ENCODE measurements at regions of chr9 and their contacts with region 1.

Region 1: DNA sequence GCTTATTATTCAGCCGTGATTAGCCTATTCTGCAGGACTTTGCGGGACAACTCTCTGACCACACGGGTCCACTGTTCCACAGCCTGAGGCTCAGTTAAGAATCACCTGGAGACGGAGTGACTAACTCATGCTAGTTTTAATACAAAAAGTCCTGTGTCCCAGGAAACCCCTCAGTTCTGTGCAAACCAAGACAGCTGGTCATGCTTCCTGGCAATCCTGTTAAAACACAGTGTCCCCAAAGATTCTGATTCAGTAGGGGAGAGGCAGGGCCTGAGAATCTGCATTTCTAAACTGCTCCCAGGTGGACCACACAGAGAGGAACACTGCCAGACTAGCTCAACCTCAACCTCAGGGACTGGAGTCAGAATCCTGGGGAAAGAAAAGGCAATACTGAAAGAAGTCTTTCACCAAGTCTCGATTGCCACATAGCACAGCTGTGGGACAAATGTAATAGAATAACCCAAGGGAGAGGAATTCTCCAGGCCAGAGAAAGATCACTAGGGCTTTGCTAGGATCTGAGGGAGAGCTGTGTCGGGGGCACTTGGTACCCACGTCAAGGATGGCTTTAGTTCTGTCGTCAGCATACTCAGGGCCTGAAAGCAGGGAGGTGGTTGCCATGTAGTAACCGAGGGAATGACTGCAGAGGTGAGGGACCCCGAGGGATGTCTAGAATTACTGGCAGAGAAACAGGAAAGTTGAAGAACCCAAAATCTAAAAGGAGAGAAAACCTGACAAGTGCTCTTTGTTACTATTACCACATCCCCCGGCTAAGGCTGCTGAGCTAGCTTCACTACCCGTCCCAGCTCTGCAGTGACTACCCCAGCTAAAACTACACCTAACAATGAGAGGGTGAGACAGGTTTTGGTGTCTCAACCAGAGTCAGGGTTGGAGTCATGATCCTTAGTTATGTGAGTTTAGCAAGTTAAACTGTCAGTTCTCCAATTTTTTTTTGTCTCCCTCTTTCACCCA is 8.6 kb downstream of the SUSD1 start:
- DNase-seq: peak; percentile 51
- H3K4me3 Mint-ChIP-seq: peak overlapping the region; percentile 18
- H3K27ac Mint-ChIP-seq: peak overlapping the region; percentile 18
- H3K4me1 Mint-ChIP-seq: peaks cover 56% of the 10 kb centered on the region
- H3K27me3 Mint-ChIP-seq: no peaks in the 10 kb centered on the region
- CTCF ChIP-seq: no peak

Region 2: GRCh38 chr9:112233768-112234167 is 67.3 kb after region 1 on chr9:
- CTCF ChIA-PET with region 1: no interaction called
- intact Hi-C with region 1: loop called (anchors 10 kb)
- DNase-seq: no peak
- H3K4me3 Mint-ChIP-seq: no peak overlapping the region
- H3K27ac Mint-ChIP-seq: no peak overlapping the region
- H3K4me1 Mint-ChIP-seq: no peaks in the 10 kb centered on the region
- H3K27me3 Mint-ChIP-seq: no peaks in the 10 kb centered on the region
- CTCF ChIP-seq: no peak

Region 3: DNA sequence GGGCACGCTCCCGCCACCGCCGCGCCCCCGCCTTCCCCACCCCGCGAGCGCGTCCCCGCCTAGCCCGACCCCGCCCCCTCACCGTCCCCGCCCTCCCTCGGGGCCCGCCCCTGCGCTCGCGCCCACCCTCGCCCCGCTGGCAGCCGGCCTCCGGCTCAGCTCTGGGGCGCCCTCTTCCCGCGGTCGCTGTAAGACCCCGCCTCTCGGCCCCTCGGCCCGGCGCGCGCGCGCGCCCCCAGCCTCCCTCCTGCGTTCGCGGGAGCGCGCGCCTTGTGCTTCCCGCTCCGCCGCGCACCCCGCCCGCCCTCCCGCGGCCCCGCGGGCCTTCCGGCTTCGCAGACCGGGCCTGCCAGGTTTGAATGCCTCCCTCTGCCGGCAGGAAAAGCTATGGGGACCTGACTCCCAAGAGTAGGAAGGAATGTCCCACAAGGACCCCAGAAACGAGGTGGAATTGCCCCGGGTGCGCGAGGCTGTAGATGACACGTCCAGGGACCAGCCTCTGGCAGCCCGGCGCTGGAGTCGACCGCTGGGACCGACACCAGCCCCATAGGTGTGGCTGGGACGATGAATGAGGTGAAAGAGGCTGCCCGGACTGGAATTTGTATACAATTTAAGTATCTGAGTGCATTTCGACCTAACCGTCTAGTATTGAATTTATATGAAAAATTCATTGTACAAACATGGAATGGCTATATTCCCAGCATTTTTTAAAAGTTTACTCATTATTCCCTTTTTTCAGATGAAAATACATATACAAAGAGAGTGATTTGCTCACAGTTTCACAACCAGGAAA is 167.4 kb after region 1 on chr9:
- CTCF ChIA-PET with region 1: interaction called, 6 read pairs
- intact Hi-C with region 1: loop called (anchors 2 kb)
- DNase-seq: peak; percentile 90
- H3K4me3 Mint-ChIP-seq: peak overlapping the region; percentile 80
- H3K27ac Mint-ChIP-seq: peak overlapping the region; percentile 88
- H3K4me1 Mint-ChIP-seq: peaks cover 22% of the 10 kb centered on the region
- H3K27me3 Mint-ChIP-seq: no peaks in the 10 kb centered on the region
- CTCF ChIP-seq: peak; percentile 20

Measured in Calu3 (cell line).